GM18951 (cell line): ENCODE measurements at regions of chr15 and their contacts with region 1.

Region 1: DNA sequence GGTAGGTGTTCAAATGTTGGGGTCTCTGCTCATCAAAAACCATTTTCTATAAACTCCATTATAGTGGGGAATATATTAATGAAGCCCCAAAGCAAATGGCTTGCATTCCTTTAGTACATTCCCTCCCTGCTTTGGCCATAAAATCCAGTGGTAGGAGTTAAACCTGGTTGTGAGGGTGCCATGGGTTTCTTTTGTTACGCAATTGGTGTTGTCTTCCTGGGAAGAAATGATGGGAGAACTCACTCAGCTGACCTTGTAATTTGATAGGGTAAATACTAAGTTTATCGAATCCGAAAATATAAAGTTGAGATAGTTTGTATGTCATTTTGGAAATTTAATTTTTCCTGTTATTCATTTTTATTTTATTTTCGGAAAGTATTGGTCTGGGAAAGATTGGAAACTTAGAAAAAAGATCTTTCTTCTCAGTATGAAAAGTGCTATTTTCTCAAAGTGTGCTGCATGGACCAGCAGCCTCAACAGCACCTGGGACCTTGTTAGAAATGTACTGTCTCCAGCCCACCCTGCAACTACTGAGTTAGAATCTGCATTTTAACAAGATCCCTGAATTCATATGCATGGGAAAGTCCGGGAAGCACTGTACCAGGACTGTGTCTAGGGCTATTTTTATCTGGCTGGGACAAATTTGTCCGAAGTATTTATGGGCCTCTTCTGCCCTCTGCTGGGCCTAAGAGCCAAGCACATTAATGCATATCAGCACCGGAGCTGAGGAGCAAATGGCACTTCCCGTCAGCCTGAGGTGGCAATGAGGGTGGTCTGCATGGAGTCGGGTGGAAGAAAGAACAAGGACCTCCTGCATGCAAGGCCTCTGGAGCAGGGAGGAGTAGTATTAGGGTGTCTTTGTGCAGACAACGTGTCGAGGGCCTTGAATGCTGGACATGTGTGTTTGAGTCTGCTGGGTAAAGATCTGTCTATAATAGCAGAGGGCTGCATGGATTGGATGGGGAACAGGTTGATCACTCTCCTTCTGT is 54.7 kb downstream of the FAM81A start:
- POLR2A ChIP-seq: no peak

Region 2: DNA sequence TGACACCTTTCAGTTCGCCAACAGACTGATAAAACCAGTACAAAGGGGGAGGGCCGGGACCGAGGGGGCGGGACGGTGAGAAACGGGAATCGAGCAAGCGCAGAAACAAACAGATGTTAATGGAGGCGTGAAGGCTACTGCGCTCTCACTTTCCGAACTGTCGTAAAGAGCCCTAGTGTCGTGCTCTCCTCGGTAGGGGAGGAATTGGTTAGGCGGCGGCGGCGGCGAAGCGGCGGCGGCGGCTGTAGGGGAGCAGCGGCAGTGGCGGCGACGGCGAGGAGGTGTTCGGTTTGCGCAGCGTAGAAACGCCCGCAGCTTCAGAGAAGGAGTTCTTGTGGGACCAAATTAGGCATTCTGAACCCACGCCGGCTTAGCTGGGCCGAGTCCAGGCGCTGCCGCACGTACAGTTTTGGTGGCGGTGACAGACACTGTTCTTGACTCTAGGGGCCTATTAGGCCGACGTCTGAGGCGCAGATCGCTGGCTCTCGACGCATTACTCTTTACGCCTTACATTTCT is 505.1 kb before region 1 on chr15 and contains the start of gene RNF111:
- in situ Hi-C with region 1: loop called (anchors 10 kb)
- POLR2A ChIP-seq: peak; percentile 82

Region 3: GRCh38 chr15:59174835-59175831 is 317.6 kb before region 1 on chr15:
- in situ Hi-C with region 1: loop called (anchors 25 kb)
- POLR2A ChIP-seq: no peak

Region 4: GRCh38 chr15:59268168-59268979 is 224.3 kb before region 1 on chr15:
- in situ Hi-C with region 1: no loop called
- POLR2A ChIP-seq: no peak

Region 5: DNA sequence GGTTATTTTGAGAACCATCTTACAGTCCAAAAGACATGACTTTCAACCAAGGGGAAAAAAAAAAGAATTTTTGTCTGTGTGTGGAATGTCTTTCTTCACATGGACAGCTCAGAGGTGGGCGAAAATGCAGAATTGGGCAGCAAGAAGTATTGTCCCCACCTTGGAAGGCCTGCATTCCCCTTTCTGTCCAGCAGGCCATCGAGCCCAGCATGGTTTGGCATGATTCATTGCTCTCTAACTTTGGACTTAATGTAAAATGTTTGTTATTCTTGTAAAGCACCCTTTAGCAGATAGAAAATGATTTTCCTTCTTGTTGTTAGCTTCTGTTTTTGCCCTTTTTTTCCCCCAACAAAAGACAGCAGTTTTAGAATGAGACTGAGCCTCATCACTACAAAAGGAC is 132.4 kb before region 1 on chr15:
- in situ Hi-C with region 1: no loop called
- POLR2A ChIP-seq: no peak